ENCODE measurements at regions of chr4 and their contacts with region 1.

Region 1: GRCh38 chr4:185108669-185109068 is 34.4 kb upstream of the SLC25A4 start:
- DNase-seq: no peak
- H3K4me3 ChIP-seq: no peak overlapping the region
- H3K27ac ChIP-seq: no peak overlapping the region
- H3K4me1 ChIP-seq: no peaks in the 10 kb centered on the region
- CTCF ChIP-seq: no peak

Region 2: DNA sequence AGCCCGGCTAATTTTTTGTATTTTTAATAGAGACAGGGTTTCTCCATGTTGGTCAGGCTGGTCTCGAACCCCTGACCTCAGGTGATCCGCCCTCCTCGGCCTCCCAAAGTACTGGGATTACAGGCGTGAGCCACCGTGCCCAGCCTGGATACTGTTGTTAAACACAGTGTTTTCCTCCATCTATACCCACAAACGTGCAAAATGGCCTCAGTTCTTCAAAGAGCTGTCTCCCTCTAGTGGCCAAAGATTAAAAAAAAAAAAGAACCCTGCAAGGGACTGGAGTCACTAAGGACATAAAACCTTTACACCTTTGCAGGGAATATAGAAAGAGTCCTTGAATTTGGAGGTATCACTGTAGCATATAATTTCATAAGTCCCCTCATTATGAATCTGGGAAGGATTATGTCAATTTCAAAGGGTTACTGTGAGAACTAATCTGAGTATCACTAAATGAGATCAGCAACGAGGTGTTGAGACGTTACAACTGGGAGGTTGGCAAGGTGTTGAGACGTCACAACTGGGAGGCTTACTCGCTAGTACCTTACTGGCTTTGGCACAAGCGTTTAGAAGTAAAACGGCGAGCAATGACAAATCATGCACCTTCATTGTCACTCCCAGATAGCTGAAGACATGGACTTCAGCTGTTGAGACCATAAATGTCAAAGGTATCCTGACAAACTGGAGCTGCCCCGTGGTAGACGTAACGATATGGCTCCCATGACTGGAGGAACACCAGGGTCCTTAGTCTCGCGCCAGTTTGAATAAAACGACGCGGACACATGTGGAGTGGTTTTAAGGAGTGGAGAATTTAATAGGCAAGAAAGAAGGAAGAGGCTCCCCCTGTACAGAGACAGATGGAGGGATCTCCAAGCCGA is 857.6 kb before region 1 on chr4:
- CTCF ChIA-PET with region 1: no interaction called
- POLR2A ChIA-PET with region 1: no interaction called
- intact Hi-C with region 1: no loop called
- DNase-seq: peak; percentile 77
- H3K4me3 ChIP-seq: no peak overlapping the region
- H3K27ac ChIP-seq: no peak overlapping the region
- H3K4me1 ChIP-seq: no peaks in the 10 kb centered on the region
- CTCF ChIP-seq: peak; percentile 88

Region 3: GRCh38 chr4:185028625-185029024 is 80.0 kb before region 1 on chr4:
- CTCF ChIA-PET with region 1: no interaction called
- POLR2A ChIA-PET with region 1: no interaction called
- intact Hi-C with region 1: loop called (anchors 5 kb)
- DNase-seq: no peak
- H3K4me3 ChIP-seq: no peak overlapping the region
- H3K27ac ChIP-seq: no peak overlapping the region
- H3K4me1 ChIP-seq: no peaks in the 10 kb centered on the region
- CTCF ChIP-seq: no peak

Region 4: GRCh38 chr4:185369731-185370130 is 261.1 kb after region 1 on chr4:
- CTCF ChIA-PET with region 1: no interaction called
- POLR2A ChIA-PET with region 1: no interaction called
- intact Hi-C with region 1: no loop called
- DNase-seq: no peak
- H3K4me3 ChIP-seq: no peak overlapping the region
- H3K27ac ChIP-seq: no peak overlapping the region
- H3K4me1 ChIP-seq: no peaks in the 10 kb centered on the region
- CTCF ChIP-seq: no peak

Region 5: DNA sequence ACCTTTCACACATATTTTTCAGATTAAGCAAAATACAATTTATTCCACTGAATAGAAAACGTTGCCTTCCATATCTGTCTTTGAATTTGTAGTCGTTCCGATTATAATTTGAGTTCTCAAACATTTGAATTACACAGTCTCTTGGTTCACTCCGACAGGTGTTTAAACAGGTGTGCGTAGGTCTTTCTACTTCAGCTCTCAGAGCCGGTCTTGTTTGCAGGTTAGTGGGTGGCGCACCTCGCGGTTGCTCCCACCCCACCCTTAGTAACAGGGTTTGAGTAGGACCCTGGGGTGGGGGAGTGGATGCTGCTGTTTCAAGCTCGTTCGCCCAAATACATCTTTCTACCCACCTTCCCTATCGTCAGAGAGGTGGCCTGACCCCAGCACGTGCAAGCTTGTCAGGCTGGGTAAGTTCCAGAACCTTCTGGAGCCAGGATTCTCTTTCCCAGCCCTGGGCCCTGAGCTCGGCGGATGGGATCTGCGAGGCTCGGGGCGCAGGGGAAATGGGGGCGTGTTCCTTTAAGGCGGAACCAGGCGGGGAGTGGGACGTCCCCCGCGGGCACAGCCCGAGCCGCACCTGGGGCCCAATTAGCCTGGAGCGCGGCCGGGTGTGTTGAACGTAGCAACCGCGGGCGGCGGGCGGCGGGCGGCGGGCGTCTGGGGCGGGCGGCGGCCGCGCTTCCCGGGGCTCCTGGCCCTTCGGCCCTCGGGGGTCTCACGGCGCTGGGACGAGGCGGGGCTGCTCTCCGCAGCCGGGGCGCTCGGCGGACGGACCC is 995.6 kb after region 1 on chr4 and contains the start of gene FAM149A:
- CTCF ChIA-PET with region 1: no interaction called
- POLR2A ChIA-PET with region 1: no interaction called
- intact Hi-C with region 1: no loop called
- DNase-seq: no peak
- H3K4me3 ChIP-seq: no peak within 1 kb of the TSS
- H3K27ac ChIP-seq: no peak within 1 kb of the TSS
- H3K4me1 ChIP-seq: no peaks in the 10 kb centered on the region
- CTCF ChIP-seq: no peak
- total RNA-seq, gene FAM149A: not detected in 2 replicates

Measured in OCI-LY7 (cell line).